Activated CD8-positive, alpha-beta memory T cell treated with anti-CD3 and anti-CD28 coated beads, Interleukin-2, amount 10 ng/mL, durations not matched to agents 7 days and 5 days (primary cell): ENCODE measurements at regions of chr18 and their contacts with region 1.

Region 1: GRCh38 chr18:46281185-46282176 is 177.3 kb downstream of the HAUS1 start:
- DNase-seq: peak; percentile 72
- ATAC-seq: peak; percentile 90
- H3K4me3 Mint-ChIP-seq: no peak overlapping the region
- H3K27ac Mint-ChIP-seq: no peak overlapping the region
- H3K4me1 Mint-ChIP-seq: peaks cover 10% of the 10 kb centered on the region
- H3K27me3 Mint-ChIP-seq: no peaks in the 10 kb centered on the region

Region 2: DNA sequence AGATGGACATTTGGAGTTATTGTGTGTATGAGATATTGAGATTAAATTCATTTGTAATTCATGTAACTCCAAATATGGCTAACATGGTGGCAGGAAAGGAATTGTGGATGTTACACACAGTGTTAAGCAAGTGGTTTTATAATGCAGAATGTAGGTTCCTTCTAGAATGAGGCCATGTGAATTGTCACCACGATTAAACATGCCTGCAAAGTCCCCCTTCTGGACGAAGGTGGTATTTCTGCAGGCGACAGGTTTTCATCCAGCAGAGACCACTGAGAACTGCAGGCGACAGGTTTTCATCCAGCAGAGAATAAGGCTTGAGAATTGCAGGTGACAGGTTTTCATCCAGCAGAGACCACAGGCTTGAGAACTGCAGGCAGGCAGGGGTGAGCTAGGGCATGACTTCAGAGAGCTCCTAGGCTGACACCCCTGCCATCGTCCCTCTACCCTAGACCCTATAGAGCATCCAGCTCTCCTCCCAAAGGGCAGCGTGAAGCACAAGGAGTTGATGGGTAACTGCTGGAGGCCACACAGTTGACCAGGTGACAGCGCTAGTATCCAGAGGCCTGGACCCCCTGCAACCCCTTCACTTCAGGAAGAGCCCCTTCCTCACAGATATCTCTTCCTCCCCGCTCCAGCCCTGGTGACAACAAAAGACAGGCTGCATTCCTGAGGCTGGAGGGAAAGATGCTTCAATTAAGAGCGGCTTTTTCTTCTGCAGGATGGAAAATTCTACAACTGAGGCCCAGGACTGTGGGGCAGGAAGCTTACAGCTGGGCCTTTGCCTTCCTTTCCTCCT is 199.8 kb after region 1 on chr18:
- CTCF ChIA-PET with region 1: interaction called, 20 read pairs
- DNase-seq: peak; percentile 67
- ATAC-seq: no peak
- H3K4me3 Mint-ChIP-seq: no peak overlapping the region
- H3K27ac Mint-ChIP-seq: no peak overlapping the region
- H3K4me1 Mint-ChIP-seq: no peaks in the 10 kb centered on the region
- H3K27me3 Mint-ChIP-seq: peaks cover 7% of the 10 kb centered on the region

Region 3: DNA sequence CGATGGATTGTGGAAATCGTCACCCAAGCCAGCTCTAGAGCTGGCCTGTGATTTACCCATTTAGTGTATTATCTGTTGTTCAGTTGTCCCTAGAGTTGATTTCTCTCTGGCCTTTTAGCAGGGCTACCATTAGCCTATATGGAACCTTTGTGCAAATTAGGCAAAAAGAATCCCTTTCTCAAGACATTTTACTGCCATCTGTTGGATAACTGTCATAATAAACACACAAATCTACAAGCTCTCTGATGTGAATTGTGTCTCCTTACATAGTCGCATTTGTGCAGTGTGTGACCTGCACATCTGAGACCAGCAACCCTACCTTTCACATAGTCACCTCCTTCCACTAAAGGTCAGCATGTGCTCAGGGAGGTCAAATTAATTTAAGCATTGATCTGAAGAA is 341.5 kb after region 1 on chr18:
- CTCF ChIA-PET with region 1: interaction called, 17 read pairs
- DNase-seq: no peak
- ATAC-seq: peak; percentile 31
- H3K4me3 Mint-ChIP-seq: no peak overlapping the region
- H3K27ac Mint-ChIP-seq: peak overlapping the region; percentile 80
- H3K4me1 Mint-ChIP-seq: peaks cover 32% of the 10 kb centered on the region
- H3K27me3 Mint-ChIP-seq: peaks cover 8% of the 10 kb centered on the region